Activated CD4-positive, alpha-beta memory T cell treated with anti-CD3 and anti-CD28 coated beads for 36 hours (primary cell): ENCODE measurements at regions of chr18 and their contacts with region 1.

Region 1: GRCh38 chr18:839224-840022 is 27.4 kb upstream of the YES1 start:
- DNase-seq: peak; percentile 91
- H3K4me3 Mint-ChIP-seq: no peak overlapping the region
- H3K27ac Mint-ChIP-seq: no peak overlapping the region
- H3K4me1 Mint-ChIP-seq: no peaks in the 10 kb centered on the region
- H3K27me3 Mint-ChIP-seq: no peaks in the 10 kb centered on the region

Region 2: GRCh38 chr18:623761-624620 is 215.4 kb before region 1 on chr18:
- CTCF ChIA-PET with region 1: interaction called, 127 read pairs
- POLR2A ChIA-PET with region 1: no interaction called
- intact Hi-C with region 1: loop called (anchors 2 kb)
- DNase-seq: peak; percentile 69
- H3K4me3 Mint-ChIP-seq: no peak overlapping the region
- H3K27ac Mint-ChIP-seq: no peak overlapping the region
- H3K4me1 Mint-ChIP-seq: no peaks in the 10 kb centered on the region
- H3K27me3 Mint-ChIP-seq: peaks cover 10% of the 10 kb centered on the region

Region 3: GRCh38 chr18:731185-731584 is 108.2 kb before region 1 on chr18:
- CTCF ChIA-PET with region 1: interaction called, 11 read pairs
- POLR2A ChIA-PET with region 1: no interaction called
- intact Hi-C with region 1: no loop called
- DNase-seq: no peak
- H3K4me3 Mint-ChIP-seq: no peak overlapping the region
- H3K27ac Mint-ChIP-seq: no peak overlapping the region
- H3K4me1 Mint-ChIP-seq: peaks cover 6% of the 10 kb centered on the region
- H3K27me3 Mint-ChIP-seq: no peaks in the 10 kb centered on the region

Region 4: GRCh38 chr18:741931-742512 is 97.4 kb before region 1 on chr18:
- CTCF ChIA-PET with region 1: interaction called, 171 read pairs
- POLR2A ChIA-PET with region 1: interaction called, 3 read pairs
- intact Hi-C with region 1: loop called (anchors 1 kb)
- DNase-seq: no peak
- H3K4me3 Mint-ChIP-seq: no peak overlapping the region
- H3K27ac Mint-ChIP-seq: no peak overlapping the region
- H3K4me1 Mint-ChIP-seq: no peaks in the 10 kb centered on the region
- H3K27me3 Mint-ChIP-seq: no peaks in the 10 kb centered on the region

Region 5: GRCh38 chr18:923141-923866 is 83.9 kb after region 1 on chr18:
- CTCF ChIA-PET with region 1: no interaction called
- POLR2A ChIA-PET with region 1: no interaction called
- intact Hi-C with region 1: no loop called
- DNase-seq: no peak
- H3K4me3 Mint-ChIP-seq: no peak overlapping the region
- H3K27ac Mint-ChIP-seq: no peak overlapping the region
- H3K4me1 Mint-ChIP-seq: no peaks in the 10 kb centered on the region
- H3K27me3 Mint-ChIP-seq: peaks cover 18% of the 10 kb centered on the region